GM23248 (cell line): ENCODE measurements at regions of chr6 and their contacts with region 1.

Region 1: DNA sequence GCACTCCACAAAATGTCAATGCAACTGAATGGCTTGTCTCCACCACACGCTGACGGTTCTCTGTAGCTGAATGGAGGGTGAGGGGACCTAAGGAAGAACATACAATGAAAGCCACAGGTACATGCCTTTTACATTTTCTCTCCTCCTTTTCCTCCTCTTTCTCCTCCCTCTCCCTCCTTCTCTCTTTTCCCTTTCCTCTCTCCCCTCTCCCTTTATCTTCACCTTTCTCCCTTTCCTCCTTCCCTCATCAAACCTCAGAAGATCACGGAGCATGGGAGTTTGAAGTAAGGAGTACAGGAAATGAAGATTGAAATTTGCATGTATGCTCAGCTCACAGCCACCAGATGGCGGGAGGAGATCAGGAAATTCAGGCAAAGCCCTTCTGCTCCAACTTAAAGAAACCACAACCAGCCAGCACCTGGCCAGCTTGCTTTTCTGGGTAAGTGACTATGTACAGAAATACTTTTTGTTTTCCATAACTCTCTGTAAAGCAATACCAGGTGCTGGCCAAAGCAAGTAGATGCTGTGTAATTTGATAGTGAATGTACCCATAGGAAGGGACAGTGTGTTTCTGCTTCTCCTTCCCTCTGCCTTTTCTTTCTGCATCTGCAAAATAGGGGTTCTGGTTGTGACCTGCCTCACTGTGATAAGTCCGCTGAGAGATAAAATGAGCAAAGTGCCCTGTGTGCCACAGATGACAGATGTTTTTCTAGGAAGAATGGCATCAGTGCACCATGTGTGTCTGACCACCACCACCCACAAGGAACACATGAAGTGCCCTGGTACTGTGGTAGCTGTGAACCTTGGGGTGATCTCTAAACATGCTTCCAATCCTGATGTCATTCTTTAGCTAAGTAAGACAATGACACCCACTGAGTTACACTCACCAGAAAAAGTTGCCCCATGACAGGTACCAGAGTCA is 18.6 kb upstream of the FOXO3 start:
- DNase-seq: peak; percentile 84
- H3K4me3 ChIP-seq: 0 out of 2 replicates have a peak overlapping the region, but pooled peaks have one; percentile 22
- H3K27ac ChIP-seq: no peak overlapping the region
- H3K4me1 ChIP-seq: no peaks in the 10 kb centered on the region
- H3K27me3 ChIP-seq: no peaks in the 10 kb centered on the region

Region 2: GRCh38 chr6:108242721-108243120 is 299.4 kb before region 1 on chr6:
- in situ Hi-C with region 1: no loop called
- DNase-seq: no peak
- H3K4me3 ChIP-seq: no peak overlapping the region
- H3K27ac ChIP-seq: no peak overlapping the region
- H3K4me1 ChIP-seq: no peaks in the 10 kb centered on the region
- H3K27me3 ChIP-seq: no peaks in the 10 kb centered on the region

Region 3: DNA sequence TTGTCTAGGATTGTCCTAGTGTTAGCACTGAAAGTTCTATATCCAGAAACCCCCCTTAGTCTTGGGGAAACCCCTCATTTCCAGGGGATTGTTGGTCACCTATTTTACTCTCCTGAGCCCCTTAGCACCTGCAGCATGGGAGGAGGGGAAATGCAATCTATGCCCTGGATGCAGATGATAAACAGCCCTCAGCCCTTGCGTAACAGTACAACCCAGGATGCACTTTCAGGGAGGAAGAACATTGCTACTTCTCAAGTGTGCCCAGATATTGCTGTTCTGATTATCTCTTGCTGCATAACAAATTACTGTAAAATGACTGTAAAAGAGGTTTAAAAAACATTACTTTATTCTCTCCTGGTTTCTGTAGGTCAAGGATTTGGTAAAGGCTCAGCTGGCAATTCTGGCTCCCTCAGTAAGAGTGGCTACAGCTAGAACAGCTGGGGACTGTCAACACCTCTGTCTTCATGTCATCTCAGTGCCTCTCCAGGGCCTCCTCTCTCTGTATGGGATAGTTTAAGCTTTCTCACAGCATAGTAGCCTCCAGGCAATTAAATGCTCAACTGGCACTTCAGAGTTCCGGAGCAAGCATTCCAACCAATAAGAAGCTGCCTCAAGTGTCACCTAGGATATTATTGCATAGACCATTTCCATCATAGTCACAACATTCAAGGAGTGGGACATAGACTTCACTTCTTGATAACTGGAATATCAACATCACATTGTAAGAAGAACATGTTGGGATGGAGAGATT is 99.2 kb before region 1 on chr6:
- in situ Hi-C with region 1: no loop called
- DNase-seq: no peak
- H3K4me3 ChIP-seq: no peak overlapping the region
- H3K27ac ChIP-seq: no peak overlapping the region
- H3K4me1 ChIP-seq: peaks cover 10% of the 10 kb centered on the region
- H3K27me3 ChIP-seq: no peaks in the 10 kb centered on the region

Region 4: GRCh38 chr6:108835218-108835850 is 293.2 kb after region 1 on chr6:
- in situ Hi-C with region 1: loop called (anchors 10 kb)
- DNase-seq: peak; percentile 86
- H3K4me3 ChIP-seq: no peak overlapping the region
- H3K27ac ChIP-seq: no peak overlapping the region
- H3K4me1 ChIP-seq: no peaks in the 10 kb centered on the region
- H3K27me3 ChIP-seq: no peaks in the 10 kb centered on the region

Region 5: DNA sequence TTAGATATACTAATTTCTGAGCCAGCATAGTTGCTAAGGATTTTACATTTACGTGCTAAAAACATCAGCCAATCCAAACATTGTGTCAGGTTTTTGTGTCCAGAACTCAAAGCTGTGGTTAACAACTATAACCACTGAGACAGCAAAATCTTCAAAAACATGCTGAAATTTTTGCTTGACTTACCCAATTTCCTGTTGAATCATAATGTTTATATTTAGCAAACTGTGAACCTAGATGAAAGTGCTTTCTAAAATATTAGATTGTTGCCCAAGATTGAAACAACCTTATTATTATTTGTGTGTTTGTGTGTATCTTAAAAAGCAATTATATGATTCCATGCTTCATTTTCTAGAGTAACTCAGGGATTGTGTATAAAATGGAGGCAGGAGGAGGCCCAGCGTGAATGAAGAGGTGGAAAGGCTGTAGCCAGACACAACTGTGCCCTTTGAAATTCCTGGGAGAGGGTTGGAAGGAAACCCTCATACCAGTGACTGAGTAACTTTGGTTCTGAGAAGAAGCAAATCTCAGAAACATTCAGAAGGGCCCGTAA is 354.1 kb after region 1 on chr6:
- in situ Hi-C with region 1: loop called (anchors 5 kb)
- DNase-seq: peak; percentile 91
- H3K4me3 ChIP-seq: 0 out of 2 replicates have a peak overlapping the region, but pooled peaks have one; percentile 20
- H3K27ac ChIP-seq: peak overlapping the region; percentile 91
- H3K4me1 ChIP-seq: peaks cover 23% of the 10 kb centered on the region
- H3K27me3 ChIP-seq: no peaks in the 10 kb centered on the region

Region 6: DNA sequence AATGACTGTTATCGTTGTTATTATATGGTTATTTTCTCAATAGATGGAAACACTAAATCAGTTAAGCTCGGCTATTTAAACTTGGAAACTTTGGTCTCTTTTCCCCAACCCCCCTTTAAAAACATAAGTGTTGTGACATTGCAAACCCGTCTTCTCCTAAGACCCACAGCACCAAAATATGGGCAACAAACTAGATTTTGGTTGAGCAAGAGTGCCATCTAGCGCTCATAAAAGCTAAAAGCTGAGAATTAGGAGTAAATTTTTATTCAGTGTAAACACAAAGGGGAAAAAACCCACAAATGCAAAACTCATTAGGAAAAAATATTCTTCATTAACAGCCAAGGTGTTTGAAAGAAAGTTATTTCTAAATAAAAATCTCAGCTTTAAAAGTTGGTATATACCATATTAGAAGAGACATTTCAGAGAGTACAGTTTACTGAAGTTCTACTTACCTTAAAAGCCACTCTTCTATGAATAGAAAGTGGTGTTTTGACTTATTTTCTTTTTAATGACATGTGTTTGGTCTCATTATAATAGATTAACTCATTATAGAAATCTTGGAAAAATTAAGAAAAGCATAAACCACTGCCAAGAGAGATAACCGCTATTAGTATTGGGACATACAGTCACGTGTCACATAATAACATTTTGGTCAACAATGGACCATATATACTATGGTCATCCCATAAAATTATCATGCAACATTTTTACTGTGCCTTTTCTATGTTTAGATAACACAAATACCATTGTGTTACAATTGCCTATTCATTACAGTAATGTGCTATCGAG is 531.4 kb after region 1 on chr6:
- in situ Hi-C with region 1: loop called (anchors 5 kb)
- DNase-seq: peak; percentile 77
- H3K4me3 ChIP-seq: no peak overlapping the region
- H3K27ac ChIP-seq: no peak overlapping the region
- H3K4me1 ChIP-seq: peaks cover 15% of the 10 kb centered on the region
- H3K27me3 ChIP-seq: no peaks in the 10 kb centered on the region

Region 7: DNA sequence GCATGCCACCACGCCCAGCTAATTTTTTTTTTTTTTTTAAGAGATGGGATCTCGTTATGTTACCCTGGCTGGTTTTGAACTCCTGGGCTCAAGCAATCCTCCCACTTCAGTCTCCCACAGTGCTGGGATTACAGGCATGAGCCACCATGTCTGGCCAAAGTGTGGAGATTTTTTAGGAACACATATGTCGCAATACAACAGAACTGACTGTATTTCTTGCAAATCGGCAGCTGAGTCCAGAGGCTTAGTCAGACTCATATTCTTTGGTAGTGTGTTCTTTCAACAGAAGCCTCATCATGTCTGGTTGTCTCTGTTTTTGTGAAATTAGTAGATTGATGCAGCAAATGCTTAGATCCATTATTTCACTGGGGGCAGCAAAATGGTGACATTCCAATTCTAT is 864.1 kb after region 1 on chr6:
- in situ Hi-C with region 1: loop called (anchors 25 kb)
- DNase-seq: peak; percentile 89
- H3K4me3 ChIP-seq: no peak overlapping the region
- H3K27ac ChIP-seq: 0 out of 2 replicates have a peak overlapping the region, but pooled peaks have one; percentile 20
- H3K4me1 ChIP-seq: no peaks in the 10 kb centered on the region
- H3K27me3 ChIP-seq: no peaks in the 10 kb centered on the region